HepG2 (cell line): ENCODE measurements at regions of chr5 and their contacts with region 1.

Region 1: GRCh38 chr5:63963080-63963735 is 963 bp upstream of the HTR1A start:
- DNase-seq: peak; percentile 56
- ATAC-seq: peak; percentile 70
- H3K4me3 ChIP-seq: no peak overlapping the region
- H3K27ac ChIP-seq: no peak overlapping the region
- H3K4me1 ChIP-seq: no peaks in the 10 kb centered on the region
- H3K27me3 ChIP-seq: no peaks in the 10 kb centered on the region
- CTCF ChIP-seq: peak; percentile 67
- EP300 ChIP-seq: no peak
- POLR2A ChIP-seq: no peak
- RAD21 ChIP-seq: no peak

Region 2: DNA sequence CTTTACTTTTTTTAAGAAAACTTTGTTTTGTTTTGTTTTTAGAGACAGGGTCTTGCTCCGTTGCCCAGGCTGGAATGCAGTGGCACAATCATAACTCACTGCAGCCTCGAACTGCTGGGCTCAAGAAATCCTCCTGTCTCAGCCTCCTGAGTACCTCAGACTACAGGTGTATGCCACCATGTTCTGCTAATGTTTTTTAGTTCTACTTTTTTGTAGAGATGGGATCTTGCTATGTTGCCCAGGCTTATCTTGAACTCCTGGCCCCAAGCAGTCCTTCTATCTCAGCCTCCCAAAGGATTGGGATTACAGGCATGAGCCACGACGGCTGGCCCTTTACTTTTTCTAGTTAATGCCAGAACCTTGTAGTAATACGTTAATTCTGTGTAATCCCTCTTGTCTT is 1514.7 kb before region 1 on chr5:
- CTCF ChIA-PET with region 1: no interaction called
- POLR2A ChIA-PET with region 1: no interaction called
- in situ Hi-C with region 1: no loop called
- intact Hi-C with region 1: loop called (anchors 10 kb)
- DNase-seq: no peak
- ATAC-seq: no peak
- H3K4me3 ChIP-seq: no peak overlapping the region
- H3K27ac ChIP-seq: no peak overlapping the region
- H3K4me1 ChIP-seq: no peaks in the 10 kb centered on the region
- H3K27me3 ChIP-seq: no peaks in the 10 kb centered on the region
- CTCF ChIP-seq: no peak
- EP300 ChIP-seq: no peak
- POLR2A ChIP-seq: no peak
- RAD21 ChIP-seq: no peak

Region 3: DNA sequence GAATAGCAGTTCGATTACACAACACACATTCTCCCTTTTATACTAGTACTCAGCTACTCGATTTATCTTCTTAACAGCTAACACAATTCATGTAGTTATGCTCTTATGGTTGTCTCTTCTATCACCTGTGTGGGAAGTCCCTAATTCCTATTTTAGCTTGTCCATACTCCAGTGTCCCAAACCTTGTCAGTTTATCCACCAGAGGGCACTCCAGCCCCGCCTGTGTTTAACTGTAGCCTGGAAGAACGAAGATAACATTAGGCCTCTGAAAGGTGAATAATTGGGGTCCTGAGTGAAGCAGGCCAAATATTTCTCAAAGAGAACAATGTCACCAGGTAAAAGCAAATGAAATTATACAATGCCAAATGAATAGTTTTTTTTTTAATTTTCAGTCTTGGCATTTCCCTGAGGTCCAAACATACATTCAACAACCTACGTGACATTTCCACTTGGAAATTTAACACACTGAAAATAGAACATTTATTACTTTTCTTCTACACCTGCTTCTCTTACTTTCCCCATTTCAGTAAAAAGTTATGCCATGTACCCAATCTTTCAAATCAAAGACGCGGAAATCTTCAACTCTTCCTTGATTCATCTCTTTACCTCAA is 561.7 kb before region 1 on chr5:
- CTCF ChIA-PET with region 1: interaction called, 16 read pairs
- POLR2A ChIA-PET with region 1: no interaction called
- in situ Hi-C with region 1: loop called (anchors 10 kb)
- intact Hi-C with region 1: no loop called
- DNase-seq: peak; percentile 35
- ATAC-seq: peak; percentile 92
- H3K4me3 ChIP-seq: no peak overlapping the region
- H3K27ac ChIP-seq: no peak overlapping the region
- H3K4me1 ChIP-seq: no peaks in the 10 kb centered on the region
- H3K27me3 ChIP-seq: no peaks in the 10 kb centered on the region
- CTCF ChIP-seq: peak; percentile 73
- EP300 ChIP-seq: no peak
- POLR2A ChIP-seq: no peak
- RAD21 ChIP-seq: 0 out of 2 replicates have a peak, but pooled peaks have one; percentile 27

Region 4: DNA sequence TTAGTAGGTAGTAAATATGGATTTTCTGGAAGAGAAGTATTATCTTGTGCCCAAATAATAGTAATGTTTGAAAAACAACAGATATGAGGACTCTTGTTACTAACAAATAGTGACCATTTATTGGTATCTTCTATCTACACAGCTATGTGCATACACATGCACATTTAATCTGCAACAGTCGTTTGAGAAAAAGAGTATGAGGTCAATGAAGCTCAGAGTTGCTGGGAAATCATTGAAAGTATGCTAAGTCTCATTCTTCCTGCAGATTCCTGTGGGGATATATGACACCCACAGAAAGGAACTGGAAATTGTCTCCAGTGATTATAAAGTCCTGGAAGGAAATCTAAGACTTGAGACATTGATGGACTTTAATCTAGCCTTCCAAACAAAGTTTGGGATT is 162.3 kb after region 1 on chr5:
- CTCF ChIA-PET with region 1: no interaction called
- POLR2A ChIA-PET with region 1: no interaction called
- in situ Hi-C with region 1: no loop called
- intact Hi-C with region 1: no loop called
- DNase-seq: no peak
- ATAC-seq: no peak
- H3K4me3 ChIP-seq: no peak overlapping the region
- H3K27ac ChIP-seq: no peak overlapping the region
- H3K4me1 ChIP-seq: no peaks in the 10 kb centered on the region
- H3K27me3 ChIP-seq: no peaks in the 10 kb centered on the region
- CTCF ChIP-seq: no peak
- EP300 ChIP-seq: no peak
- POLR2A ChIP-seq: no peak
- RAD21 ChIP-seq: no peak

Region 5: GRCh38 chr5:64318175-64318574 is 355.0 kb after region 1 on chr5:
- CTCF ChIA-PET with region 1: no interaction called
- POLR2A ChIA-PET with region 1: no interaction called
- in situ Hi-C with region 1: no loop called
- intact Hi-C with region 1: no loop called
- DNase-seq: no peak
- ATAC-seq: no peak
- H3K4me3 ChIP-seq: no peak overlapping the region
- H3K27ac ChIP-seq: no peak overlapping the region
- H3K4me1 ChIP-seq: no peaks in the 10 kb centered on the region
- H3K27me3 ChIP-seq: no peaks in the 10 kb centered on the region
- CTCF ChIP-seq: no peak
- EP300 ChIP-seq: no peak
- POLR2A ChIP-seq: no peak
- RAD21 ChIP-seq: no peak

Region 6: DNA sequence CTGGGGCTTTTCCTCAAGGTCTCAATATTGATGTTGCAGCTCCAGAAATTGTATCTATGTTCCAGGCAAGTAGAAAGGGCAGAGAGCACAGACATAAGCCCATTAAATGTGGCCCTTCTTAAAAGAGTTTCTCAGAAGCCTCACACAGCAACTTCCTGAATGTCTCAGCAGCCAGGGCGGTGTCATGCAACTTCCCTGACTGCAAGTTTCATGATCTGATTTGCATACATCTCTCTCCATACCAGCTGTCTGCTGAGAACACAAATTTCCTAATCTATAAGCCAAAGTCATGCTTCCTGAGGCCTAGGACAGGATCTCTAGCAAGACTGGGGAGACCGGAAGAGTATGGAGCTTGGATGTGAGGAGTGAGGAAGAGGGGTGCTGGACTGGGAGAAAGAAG is 555.6 kb after region 1 on chr5:
- CTCF ChIA-PET with region 1: no interaction called
- POLR2A ChIA-PET with region 1: no interaction called
- in situ Hi-C with region 1: no loop called
- intact Hi-C with region 1: no loop called
- DNase-seq: no peak
- ATAC-seq: no peak
- H3K4me3 ChIP-seq: no peak overlapping the region
- H3K27ac ChIP-seq: no peak overlapping the region
- H3K4me1 ChIP-seq: no peaks in the 10 kb centered on the region
- H3K27me3 ChIP-seq: no peaks in the 10 kb centered on the region
- CTCF ChIP-seq: no peak
- EP300 ChIP-seq: no peak
- POLR2A ChIP-seq: no peak
- RAD21 ChIP-seq: no peak